ENCODE measurements at regions of chr18 and their contacts with region 1.

Region 1: GRCh38 chr18:41906528-41907146 is 48.4 kb upstream of the PIK3C3 start:
- DNase-seq: peak; percentile 27
- H3K4me3 Mint-ChIP-seq: no peak overlapping the region
- H3K27ac Mint-ChIP-seq: peak overlapping the region; percentile 56
- H3K4me1 Mint-ChIP-seq: peaks cover 16% of the 10 kb centered on the region
- H3K27me3 Mint-ChIP-seq: peaks cover 9% of the 10 kb centered on the region

Region 2: GRCh38 chr18:41767960-41768359 is 138.7 kb before region 1 on chr18:
- intact Hi-C with region 1: loop called (anchors 10 kb)
- DNase-seq: no peak
- H3K4me3 Mint-ChIP-seq: no peak overlapping the region
- H3K27ac Mint-ChIP-seq: no peak overlapping the region
- H3K4me1 Mint-ChIP-seq: no peaks in the 10 kb centered on the region
- H3K27me3 Mint-ChIP-seq: no peaks in the 10 kb centered on the region

Region 3: DNA sequence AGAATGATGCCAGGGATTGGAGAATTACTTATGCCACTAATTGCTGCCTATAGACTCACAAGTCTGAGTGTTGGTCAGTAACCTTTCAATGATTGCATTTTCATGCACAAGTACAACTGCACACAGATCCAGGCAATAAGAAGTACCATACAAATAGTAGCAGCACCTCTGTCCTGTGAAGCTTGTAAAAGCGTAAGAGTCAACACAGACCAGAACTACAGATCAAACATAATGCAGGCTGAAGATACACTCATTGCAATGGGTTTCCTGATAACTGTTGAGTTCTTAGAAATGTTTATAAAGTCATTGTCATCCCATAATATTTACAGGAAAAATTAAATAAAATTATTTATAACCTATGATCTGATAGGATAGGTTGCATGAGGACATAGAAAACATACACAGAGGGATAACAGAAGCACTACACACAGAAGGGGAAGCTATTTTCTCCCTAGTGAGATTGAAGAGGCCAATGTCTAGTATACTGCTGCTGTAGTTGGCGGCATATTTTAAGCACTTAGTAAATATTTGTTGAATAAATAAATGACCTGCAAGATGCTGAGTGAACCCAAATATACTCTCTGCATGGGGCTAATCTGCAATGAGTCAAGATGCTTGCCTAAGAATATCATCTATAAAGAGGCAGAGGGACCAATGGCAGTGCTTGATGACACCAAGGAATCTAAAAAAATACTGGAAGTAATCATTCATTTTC is 42.7 kb after region 1 on chr18:
- intact Hi-C with region 1: loop called (anchors 2 kb)
- DNase-seq: no peak
- H3K4me3 Mint-ChIP-seq: no peak overlapping the region
- H3K27ac Mint-ChIP-seq: peak overlapping the region; percentile 78
- H3K4me1 Mint-ChIP-seq: peaks cover 21% of the 10 kb centered on the region
- H3K27me3 Mint-ChIP-seq: peaks cover 11% of the 10 kb centered on the region

Region 4: GRCh38 chr18:41954827-41955613 is 48.4 kb after region 1 on chr18 and contains the start of gene PIK3C3:
- intact Hi-C with region 1: loop called (anchors 2 kb)
- DNase-seq: peak; percentile 93
- H3K4me3 Mint-ChIP-seq: peak within 1 kb of the TSS; percentile 100
- H3K27ac Mint-ChIP-seq: peak within 1 kb of the TSS; percentile 98
- H3K4me1 Mint-ChIP-seq: peaks cover 23% of the 10 kb centered on the region
- H3K27me3 Mint-ChIP-seq: peaks cover 3% of the 10 kb centered on the region
- total RNA-seq, gene PIK3C3: 50.4 and 51.6 TPM in 2 replicates